AG04450 (cell line): ENCODE measurements at regions of chr18 and their contacts with region 1.

Region 1: GRCh38 chr18:76274468-76275289 is 220.4 kb downstream of the ZNF516 start:
- DNase-seq: no peak
- H3K4me3 ChIP-seq: no peak overlapping the region
- H3K27ac ChIP-seq: no peak overlapping the region
- H3K27me3 ChIP-seq: peaks cover 3% of the 10 kb centered on the region
- CTCF ChIP-seq: no peak

Region 2: DNA sequence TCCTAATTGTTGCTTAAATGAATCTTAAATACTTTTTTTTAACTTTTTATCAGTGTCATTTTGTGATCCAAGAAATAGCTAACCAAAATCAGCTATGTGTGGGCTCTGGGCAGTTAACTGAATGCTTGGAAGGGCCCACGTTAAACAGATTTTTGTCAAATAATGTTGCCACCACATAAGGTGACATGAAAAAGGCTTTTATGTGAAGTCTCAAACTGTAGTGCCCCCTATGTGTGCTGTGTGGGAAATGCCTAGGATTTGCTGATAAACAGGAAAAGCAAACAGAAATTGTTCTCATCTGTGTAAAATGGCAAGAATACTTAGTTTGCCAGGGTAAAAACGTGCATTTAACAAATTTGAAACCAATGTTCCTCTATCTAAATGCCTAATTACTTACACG is 21.8 kb before region 1 on chr18:
- CTCF ChIA-PET with region 1: interaction called, 14 read pairs
- POLR2A ChIA-PET with region 1: no interaction called
- DNase-seq: no peak
- H3K4me3 ChIP-seq: no peak overlapping the region
- H3K27ac ChIP-seq: no peak overlapping the region
- H3K27me3 ChIP-seq: no peaks in the 10 kb centered on the region
- CTCF ChIP-seq: peak; percentile 46